CD4-positive, alpha-beta T cell (primary cell): ENCODE measurements at regions of chr1 and their contacts with region 1.

Region 1: GRCh38 chr1:167517535-167518330 is 596 bp downstream of the CD247 start:
- DNase-seq: peak; percentile 70 to 93 (median 83)
- ATAC-seq: peak; percentile 71
- H3K4me3 ChIP-seq: peak overlapping the region; percentile 89
- H3K4me3 Mint-ChIP-seq: peak overlapping the region; percentile 99
- H3K27ac ChIP-seq: peak overlapping the region; percentile 91 to 96
- H3K27ac Mint-ChIP-seq: peak overlapping the region; percentile 100
- H3K4me1 ChIP-seq: peaks cover 31% of the 10 kb centered on the region
- H3K4me1 Mint-ChIP-seq: peaks cover 69% of the 10 kb centered on the region
- H3K27me3 ChIP-seq: no peaks in the 10 kb centered on the region
- H3K27me3 Mint-ChIP-seq: no peaks in the 10 kb centered on the region
- CTCF ChIP-seq: no peak

Region 2: DNA sequence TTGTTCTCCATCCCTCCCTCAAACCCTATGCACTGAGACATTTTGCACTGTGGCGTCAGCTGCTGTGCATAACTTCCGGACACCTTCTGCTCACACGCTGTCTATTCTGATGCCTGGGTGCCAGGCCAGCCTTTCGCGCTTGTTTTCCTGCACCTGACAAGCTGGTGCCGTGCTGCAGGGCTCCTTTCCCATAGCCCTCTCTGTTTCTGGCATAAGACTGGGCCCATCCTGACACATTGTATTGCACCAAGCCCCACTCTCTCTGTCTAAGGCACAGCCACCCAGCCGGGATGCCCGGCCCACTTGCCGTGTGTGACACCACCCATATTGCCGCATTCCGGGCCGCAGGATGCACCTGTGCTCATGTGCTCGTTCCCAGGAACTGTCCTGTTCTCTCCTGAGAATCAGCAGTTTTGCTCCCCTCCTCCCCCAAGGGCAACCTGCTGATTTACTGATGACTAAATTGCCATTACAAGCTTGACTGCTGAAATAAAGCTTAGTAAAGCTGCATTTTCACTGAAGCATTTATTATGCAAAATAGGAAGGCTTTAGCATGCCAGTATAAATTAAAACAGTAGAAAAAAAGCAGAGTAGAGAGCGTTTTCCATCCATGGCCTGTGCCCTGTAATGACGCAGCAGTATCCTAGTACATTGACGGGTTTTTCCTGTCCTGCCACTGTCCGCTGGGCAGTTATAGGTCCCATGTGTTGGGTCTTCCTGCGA is 87.4 kb before region 1 on chr1:
- CTCF ChIA-PET with region 1: no interaction called
- POLR2A ChIA-PET with region 1: interaction called, 13 read pairs
- intact Hi-C with region 1: no loop called
- DNase-seq: peak in 1 of 14 experiments; percentile 48
- ATAC-seq: peak; percentile 48
- H3K4me3 ChIP-seq: no peak overlapping the region
- H3K4me3 Mint-ChIP-seq: peak overlapping the region; percentile 72
- H3K27ac ChIP-seq: peak overlapping the region in 1 of 2 donors; percentile 21
- H3K27ac Mint-ChIP-seq: peak overlapping the region; percentile 80
- H3K4me1 ChIP-seq: peaks cover 61% of the 10 kb centered on the region
- H3K4me1 Mint-ChIP-seq: peaks cover 67% of the 10 kb centered on the region
- H3K27me3 ChIP-seq: no peaks in the 10 kb centered on the region
- H3K27me3 Mint-ChIP-seq: no peaks in the 10 kb centered on the region
- CTCF ChIP-seq: no peak

Region 3: GRCh38 chr1:167447521-167448136 is 70.1 kb before region 1 on chr1:
- CTCF ChIA-PET with region 1: interaction called, 5 read pairs
- POLR2A ChIA-PET with region 1: interaction called, 202 read pairs
- intact Hi-C with region 1: loop called in 1 of 2 experiments (anchors 2 kb)
- DNase-seq: peak; percentile 49 to 92 (median 68)
- ATAC-seq: peak; percentile 84
- H3K4me3 ChIP-seq: peak overlapping the region; percentile 37
- H3K4me3 Mint-ChIP-seq: peak overlapping the region; percentile 91
- H3K27ac ChIP-seq: peak overlapping the region; percentile 84 to 89
- H3K27ac Mint-ChIP-seq: peak overlapping the region; percentile 100
- H3K4me1 ChIP-seq: peaks cover 94% of the 10 kb centered on the region
- H3K4me1 Mint-ChIP-seq: peaks cover 85% of the 10 kb centered on the region
- H3K27me3 ChIP-seq: no peaks in the 10 kb centered on the region
- H3K27me3 Mint-ChIP-seq: no peaks in the 10 kb centered on the region
- CTCF ChIP-seq: no peak

Region 4: GRCh38 chr1:167467126-167467710 is 50.5 kb before region 1 on chr1:
- CTCF ChIA-PET with region 1: interaction called, 3 read pairs
- POLR2A ChIA-PET with region 1: interaction called, 37 read pairs
- intact Hi-C with region 1: no loop called
- DNase-seq: peak in 2 of 14 experiments; percentile 34
- ATAC-seq: peak; percentile 55
- H3K4me3 ChIP-seq: no peak overlapping the region
- H3K4me3 Mint-ChIP-seq: peak overlapping the region; percentile 44
- H3K27ac ChIP-seq: peak overlapping the region; percentile 3 to 46
- H3K27ac Mint-ChIP-seq: peak overlapping the region; percentile 100
- H3K4me1 ChIP-seq: peaks cover 66% of the 10 kb centered on the region
- H3K4me1 Mint-ChIP-seq: peaks cover 93% of the 10 kb centered on the region
- H3K27me3 ChIP-seq: no peaks in the 10 kb centered on the region
- H3K27me3 Mint-ChIP-seq: no peaks in the 10 kb centered on the region
- CTCF ChIP-seq: no peak

Region 5: DNA sequence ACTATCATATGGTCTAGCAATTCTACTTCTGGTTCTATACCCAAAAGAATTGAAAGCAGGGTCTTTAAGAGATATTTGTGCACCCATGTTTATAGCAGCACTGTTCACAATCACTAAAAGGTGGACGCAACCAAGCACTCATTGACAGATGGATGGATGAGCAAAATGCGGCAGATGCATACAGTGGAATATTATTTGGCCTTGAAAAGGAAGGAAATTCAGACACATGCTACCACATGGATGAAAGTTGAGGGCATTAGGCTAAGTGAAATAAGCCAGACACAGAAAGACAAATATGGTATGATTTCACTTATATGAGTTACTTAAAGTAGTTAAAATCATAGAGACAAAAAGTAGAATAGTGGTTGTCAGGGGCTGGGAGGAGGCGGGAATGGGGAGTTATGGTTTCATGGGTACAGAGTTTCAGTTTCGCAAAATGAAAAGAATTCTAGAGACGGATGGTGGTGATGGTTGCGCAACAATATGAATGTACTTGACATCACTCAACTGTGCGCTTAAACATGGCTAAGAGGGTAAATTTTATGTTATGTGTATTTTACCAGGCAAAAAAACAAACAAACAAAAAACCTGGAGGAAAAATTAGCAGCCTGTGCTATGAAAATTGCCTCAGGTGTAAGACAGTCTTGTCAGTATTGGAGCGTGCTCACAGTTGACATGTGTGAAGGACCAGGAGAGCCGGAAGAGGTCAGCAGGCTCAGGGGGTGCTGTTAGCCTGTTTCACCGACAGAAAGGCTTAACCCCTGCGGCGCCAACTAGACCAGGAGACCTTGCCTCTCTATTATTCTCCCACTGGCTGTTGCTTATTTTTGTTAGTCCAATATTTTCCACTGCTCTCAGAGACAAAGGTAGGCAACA is 25.9 kb before region 1 on chr1:
- CTCF ChIA-PET with region 1: interaction called, 32 read pairs
- POLR2A ChIA-PET with region 1: interaction called, 203 read pairs
- intact Hi-C with region 1: loop called in 1 of 2 experiments (anchors 1 kb)
- DNase-seq: peak in 3 of 14 experiments; percentile 61 to 72 (median 71)
- ATAC-seq: peak; percentile 35
- H3K4me3 ChIP-seq: peak overlapping the region; percentile 32
- H3K4me3 Mint-ChIP-seq: peak overlapping the region; percentile 74
- H3K27ac ChIP-seq: peak overlapping the region; percentile 76 to 89
- H3K27ac Mint-ChIP-seq: peak overlapping the region; percentile 100
- H3K4me1 ChIP-seq: peaks cover 98% of the 10 kb centered on the region
- H3K4me1 Mint-ChIP-seq: peaks cover 99% of the 10 kb centered on the region
- H3K27me3 ChIP-seq: no peaks in the 10 kb centered on the region
- H3K27me3 Mint-ChIP-seq: no peaks in the 10 kb centered on the region
- CTCF ChIP-seq: no peak

Region 6: GRCh38 chr1:167533851-167534300 is 16.1 kb after region 1 on chr1:
- CTCF ChIA-PET with region 1: interaction called, 21 read pairs
- POLR2A ChIA-PET with region 1: interaction called, 14 read pairs
- intact Hi-C with region 1: no loop called
- DNase-seq: peak in 13 of 14 experiments; percentile 44 to 82 (median 57)
- ATAC-seq: peak; percentile 90
- H3K4me3 ChIP-seq: no peak overlapping the region
- H3K4me3 Mint-ChIP-seq: no peak overlapping the region
- H3K27ac ChIP-seq: no peak overlapping the region
- H3K27ac Mint-ChIP-seq: no peak overlapping the region
- H3K4me1 ChIP-seq: peaks cover 7% of the 10 kb centered on the region
- H3K4me1 Mint-ChIP-seq: no peaks in the 10 kb centered on the region
- H3K27me3 ChIP-seq: no peaks in the 10 kb centered on the region
- H3K27me3 Mint-ChIP-seq: no peaks in the 10 kb centered on the region
- CTCF ChIP-seq: peak; percentile 97